ENCODE measurements at regions of chr1 and their contacts with region 1.

Region 1: DNA sequence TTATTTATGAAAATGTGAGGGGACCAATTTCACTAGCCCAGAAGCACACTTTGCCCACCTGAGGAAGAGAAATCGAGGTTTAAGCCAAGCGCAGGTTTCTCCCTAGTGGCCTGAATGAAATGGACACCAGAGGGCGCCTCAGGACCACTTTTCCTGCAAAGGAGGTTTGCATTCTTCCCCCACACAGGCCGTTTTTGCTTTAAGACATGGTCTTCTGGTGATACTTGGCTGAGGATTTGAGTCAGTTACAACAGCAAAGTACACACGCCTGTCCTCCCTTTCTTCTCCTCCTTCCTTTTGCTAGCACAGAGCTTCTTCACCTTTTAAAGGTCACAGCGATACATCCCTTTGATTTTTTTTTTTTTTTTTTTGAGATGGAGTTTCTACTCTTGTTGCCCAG is 5.4 kb downstream of the PLA2G2E start:
- DNase-seq: no peak
- H3K4me3 ChIP-seq: no peak overlapping the region
- H3K27ac ChIP-seq: no peak overlapping the region
- H3K4me1 ChIP-seq: no peaks in the 10 kb centered on the region
- H3K27me3 ChIP-seq: no peaks in the 10 kb centered on the region
- CTCF ChIP-seq: peak; percentile 77 to 93 (median 86)
- POLR2A ChIP-seq: no peak

Region 2: DNA sequence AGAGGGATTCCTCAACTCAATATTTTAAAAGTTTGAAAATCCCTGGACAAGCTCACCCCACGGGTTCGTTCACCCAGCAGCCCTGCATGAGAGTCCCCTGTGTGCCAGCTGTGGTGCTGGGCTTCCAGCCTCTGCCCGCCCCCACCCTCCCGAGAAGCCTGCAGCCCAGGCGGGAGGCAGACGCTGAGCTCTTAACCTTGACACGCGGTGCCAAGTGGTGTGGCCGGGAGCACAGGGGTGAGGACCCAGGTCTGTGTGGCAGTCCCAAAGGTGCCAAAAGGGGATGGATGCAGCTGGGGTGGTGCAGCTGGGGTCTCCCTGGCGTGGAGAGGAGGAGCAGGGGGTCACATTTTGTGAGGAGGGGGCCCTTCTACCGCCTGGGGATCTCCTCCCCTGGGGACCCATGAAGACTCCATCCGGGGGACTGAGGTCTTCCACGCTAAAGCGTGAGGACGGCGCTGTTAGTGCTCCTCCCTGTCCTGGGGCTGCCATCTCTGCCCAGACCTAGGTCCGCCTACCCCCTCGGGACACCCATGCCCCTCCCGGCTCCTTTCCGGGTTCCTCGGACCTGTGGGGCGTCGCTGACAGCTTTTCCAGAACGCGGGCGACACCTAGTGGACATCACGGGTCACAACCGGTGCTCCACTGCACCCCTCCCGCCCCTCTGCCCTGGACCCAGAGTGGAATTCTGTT is 234.0 kb after region 1 on chr1:
- intact Hi-C with region 1: loop called (anchors 2 kb)
- DNase-seq: no peak
- H3K4me3 ChIP-seq: peak overlapping the region; percentile 26 to 49
- H3K27ac ChIP-seq: no peak overlapping the region
- H3K4me1 ChIP-seq: peaks cover 5% of the 10 kb centered on the region
- H3K27me3 ChIP-seq: no peaks in the 10 kb centered on the region
- CTCF ChIP-seq: peak; percentile 90 to 98 (median 92)
- POLR2A ChIP-seq: no peak

Region 3: DNA sequence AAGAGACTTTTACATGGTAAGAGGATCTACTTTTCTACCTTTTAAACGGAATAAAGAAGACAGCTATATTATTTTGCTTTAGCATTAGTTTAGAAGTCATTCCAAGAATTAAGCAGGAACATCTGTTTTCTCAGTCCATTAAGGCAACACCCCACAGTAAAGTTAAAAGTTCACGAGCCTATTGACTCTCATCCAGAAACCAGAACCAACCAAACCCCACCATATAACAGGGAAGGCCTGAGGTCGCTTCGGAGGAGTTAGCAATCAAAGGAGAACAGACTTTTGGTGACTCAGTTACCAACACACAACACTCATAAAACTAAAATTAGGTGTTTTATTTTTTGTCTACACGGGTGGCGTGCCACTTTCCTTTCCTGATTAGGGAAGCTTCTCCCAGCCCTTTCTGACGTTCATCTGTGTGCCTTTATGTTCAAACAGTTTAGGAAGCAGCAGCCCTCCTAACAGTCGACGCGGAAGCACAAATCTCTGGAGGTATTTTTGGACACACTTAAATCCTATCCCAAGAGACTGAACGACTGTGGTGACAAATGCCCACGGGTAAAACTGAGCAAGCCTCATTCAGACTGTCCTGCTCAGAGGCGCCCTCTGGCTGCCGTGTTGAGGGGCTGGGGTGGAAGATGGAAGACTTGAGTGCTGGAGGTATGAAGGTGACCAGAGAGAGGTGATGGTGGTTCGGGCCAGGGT is 276.9 kb after region 1 on chr1:
- intact Hi-C with region 1: no loop called
- DNase-seq: no peak
- H3K4me3 ChIP-seq: no peak overlapping the region
- H3K27ac ChIP-seq: peak overlapping the region; percentile 9
- H3K4me1 ChIP-seq: peaks cover 11% of the 10 kb centered on the region
- H3K27me3 ChIP-seq: no peaks in the 10 kb centered on the region
- CTCF ChIP-seq: peak in 2 of 3 experiments; percentile 25 to 57
- POLR2A ChIP-seq: no peak

Measured in vagina (tissue), 2 donors.